HepG2 (cell line): ENCODE measurements at regions of chr9 and their contacts with region 1.

Region 1: GRCh38 chr9:129080602-129081387 is at the start of gene DOLPP1:
- DNase-seq: peak; percentile 97
- ATAC-seq: peak; percentile 95
- H3K4me3 ChIP-seq: peak within 1 kb of the TSS; percentile 75 to 97 (median 87)
- H3K27ac ChIP-seq: peak within 1 kb of the TSS; percentile 84
- H3K4me1 ChIP-seq: peaks cover 70% of the 10 kb centered on the region
- H3K27me3 ChIP-seq: no peaks in the 10 kb centered on the region
- CTCF ChIP-seq: no peak
- EP300 ChIP-seq: no peak
- POLR2A ChIP-seq: peak in 1 of 2 experiments; percentile 62; a peak in 2 of 4 replicates
- RAD21 ChIP-seq: 0 out of 2 replicates have a peak, but pooled peaks have one; percentile 30
- total RNA-seq, gene DOLPP1: 15.1 and 34.1 TPM in 2 replicates

Region 2: DNA sequence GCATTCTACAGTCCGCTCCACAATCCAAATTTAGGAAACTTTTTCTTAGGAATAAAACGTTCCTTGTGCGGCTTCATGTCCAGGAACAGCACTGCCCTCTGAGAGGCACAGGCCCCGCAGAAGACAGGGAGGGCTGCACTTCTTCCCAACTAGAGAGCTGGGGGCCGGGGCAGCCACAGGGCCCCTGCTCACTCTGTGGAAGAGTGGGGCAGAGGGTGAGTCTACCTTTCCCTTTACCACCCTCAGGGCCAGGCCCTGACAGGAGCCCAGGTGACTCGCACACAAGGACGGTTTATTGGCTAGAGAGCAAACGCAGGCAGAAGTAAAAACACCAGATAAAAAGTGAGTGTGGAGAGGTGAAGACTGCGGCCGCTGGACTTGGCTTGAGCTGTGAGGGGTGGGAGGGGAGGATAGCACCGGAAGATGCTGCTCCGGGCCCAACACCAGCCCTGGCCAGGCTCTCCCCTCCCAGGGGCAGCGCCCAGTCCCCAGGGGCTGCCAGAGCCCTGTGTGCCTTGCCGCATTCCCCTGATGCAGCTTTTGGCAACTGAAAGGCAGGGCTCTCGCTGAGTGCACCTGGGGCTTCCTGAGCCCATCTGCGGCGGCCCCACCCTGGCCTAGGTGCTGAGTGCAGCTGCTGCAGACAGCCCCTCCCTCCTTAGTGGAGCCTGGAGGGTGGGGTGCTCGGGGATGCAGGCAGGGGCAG is 72.9 kb before region 1 on chr9:
- CTCF ChIA-PET with region 1: no interaction called
- POLR2A ChIA-PET with region 1: no interaction called
- in situ Hi-C with region 1: no loop called
- intact Hi-C with region 1: no loop called
- DNase-seq: no peak
- ATAC-seq: no peak
- H3K4me3 ChIP-seq: no peak overlapping the region
- H3K27ac ChIP-seq: no peak overlapping the region
- H3K4me1 ChIP-seq: no peaks in the 10 kb centered on the region
- H3K27me3 ChIP-seq: no peaks in the 10 kb centered on the region
- CTCF ChIP-seq: no peak
- EP300 ChIP-seq: no peak
- POLR2A ChIP-seq: no peak
- RAD21 ChIP-seq: no peak

Region 3: DNA sequence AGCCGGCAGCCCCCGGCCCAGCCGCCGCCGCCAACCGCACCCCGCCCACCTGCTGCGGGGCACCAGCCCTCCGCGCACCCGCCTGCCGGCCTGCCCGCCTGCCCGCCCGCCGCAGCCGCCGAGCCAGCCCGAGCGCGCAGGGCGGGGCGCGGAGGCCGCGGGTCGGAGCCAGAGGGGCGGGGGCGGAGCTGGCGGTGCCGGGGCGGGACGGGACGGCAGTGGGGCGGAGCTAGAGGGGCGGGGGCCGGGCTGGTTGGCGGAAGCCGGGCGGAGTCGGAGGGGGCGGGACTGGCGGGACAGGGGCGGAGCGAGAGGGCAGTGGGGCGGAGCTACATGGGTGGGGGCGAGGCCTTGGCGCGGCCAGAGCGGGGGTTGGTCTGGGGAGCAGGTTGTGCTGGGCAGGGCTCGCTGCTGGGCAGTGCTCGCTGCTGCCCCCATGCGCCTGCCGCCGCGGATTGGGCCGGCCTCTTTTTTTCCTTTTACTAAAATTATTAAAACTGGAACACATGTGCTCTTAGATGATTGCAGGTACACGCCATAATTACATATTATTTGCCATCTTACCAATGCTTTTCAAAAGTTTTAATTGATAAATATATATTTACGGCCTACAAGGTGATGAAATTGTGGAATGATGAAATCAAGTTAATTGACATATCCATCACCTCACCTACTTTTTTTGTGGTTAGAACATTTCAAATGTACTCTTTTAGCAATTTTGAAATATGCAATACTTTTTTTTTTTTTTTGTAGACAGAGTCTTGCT is 52.4 kb before region 1 on chr9 and contains the start of gene SH3GLB2:
- CTCF ChIA-PET with region 1: no interaction called
- POLR2A ChIA-PET with region 1: interaction called, 12 read pairs
- in situ Hi-C with region 1: no loop called
- intact Hi-C with region 1: no loop called
- DNase-seq: peak; percentile 79
- ATAC-seq: peak; percentile 79
- H3K4me3 ChIP-seq: peak within 1 kb of the TSS; percentile 65 to 76 (median 69); a peak in 5 of 6 replicates
- H3K27ac ChIP-seq: peak within 1 kb of the TSS; percentile 55
- H3K4me1 ChIP-seq: peaks cover 38% of the 10 kb centered on the region
- H3K27me3 ChIP-seq: no peaks in the 10 kb centered on the region
- CTCF ChIP-seq: peak; percentile 78
- EP300 ChIP-seq: no peak
- POLR2A ChIP-seq: peak in 1 of 2 experiments; percentile 38; a peak in 1 of 4 replicates
- RAD21 ChIP-seq: peak; percentile 60
- total RNA-seq, gene SH3GLB2: 10.5 and 24.0 TPM in 2 replicates

Region 4: DNA sequence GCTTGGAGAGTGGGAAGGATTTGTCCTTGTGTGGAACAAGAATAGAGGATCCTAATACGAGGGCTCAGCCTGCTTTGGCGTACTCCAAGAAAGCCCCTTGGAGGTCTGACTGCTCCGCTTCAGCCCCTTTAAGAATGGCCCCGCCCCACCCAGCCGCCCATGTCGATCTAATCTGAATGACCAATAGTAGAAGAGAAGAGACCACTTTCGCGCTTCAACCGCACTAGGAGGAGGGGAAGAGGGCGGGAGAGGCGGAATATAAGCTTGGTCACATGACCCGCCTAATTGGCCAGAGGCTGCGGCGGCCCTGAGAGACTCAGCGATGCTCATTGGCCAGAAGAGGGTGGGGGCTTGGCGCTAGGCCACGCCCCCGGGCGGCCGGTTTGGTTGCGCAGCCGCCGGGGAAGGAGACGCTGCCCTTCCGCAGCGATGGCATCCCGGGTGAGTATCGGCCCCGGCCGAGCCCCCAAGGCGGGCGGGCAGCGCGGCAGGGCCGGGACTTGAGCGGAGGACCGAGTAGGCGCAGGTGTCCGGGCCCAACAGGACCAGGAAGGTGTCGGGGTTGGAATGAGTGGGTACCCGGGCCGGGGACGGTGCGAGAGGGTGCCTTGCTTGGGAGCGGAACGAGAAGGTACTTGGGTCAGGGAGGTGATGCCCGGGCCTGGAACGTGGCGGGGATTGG is 44.4 kb before region 1 on chr9 and contains the start of gene MIGA2:
- CTCF ChIA-PET with region 1: no interaction called
- POLR2A ChIA-PET with region 1: interaction called, 13 read pairs
- in situ Hi-C with region 1: no loop called
- intact Hi-C with region 1: loop called (anchors 5 kb)
- DNase-seq: peak; percentile 98
- ATAC-seq: peak; percentile 86
- H3K4me3 ChIP-seq: peak within 1 kb of the TSS; percentile 73 to 97 (median 96)
- H3K27ac ChIP-seq: peak within 1 kb of the TSS; percentile 77
- H3K4me1 ChIP-seq: peaks cover 27% of the 10 kb centered on the region
- H3K27me3 ChIP-seq: no peaks in the 10 kb centered on the region; a peak in 1 of 5 replicates
- CTCF ChIP-seq: no peak
- EP300 ChIP-seq: no peak
- POLR2A ChIP-seq: peak; percentile 71 to 74
- RAD21 ChIP-seq: peak; percentile 56; the same call in 1 of the 2 replicates
- total RNA-seq, gene MIGA2: 8.9 and 17.1 TPM in 2 replicates

Region 5: GRCh38 chr9:129064499-129064908 is 16.3 kb before region 1 on chr9:
- CTCF ChIA-PET with region 1: no interaction called
- POLR2A ChIA-PET with region 1: interaction called, 17 read pairs
- in situ Hi-C with region 1: no loop called
- intact Hi-C with region 1: no loop called
- DNase-seq: peak; percentile 95
- ATAC-seq: peak; percentile 94
- H3K4me3 ChIP-seq: no peak overlapping the region
- H3K27ac ChIP-seq: peak overlapping the region; percentile 66
- H3K4me1 ChIP-seq: peaks cover 26% of the 10 kb centered on the region
- H3K27me3 ChIP-seq: no peaks in the 10 kb centered on the region
- CTCF ChIP-seq: no peak
- EP300 ChIP-seq: peak in 1 of 2 experiments; percentile 21; a peak in 1 of 4 replicates
- POLR2A ChIP-seq: peak; percentile 33 to 59; a peak in 1 of 4 replicates
- RAD21 ChIP-seq: no peak

Region 6: GRCh38 chr9:129093421-129094204 is 12.8 kb after region 1 on chr9:
- CTCF ChIA-PET with region 1: no interaction called
- POLR2A ChIA-PET with region 1: interaction called, 11 read pairs
- in situ Hi-C with region 1: no loop called
- intact Hi-C with region 1: no loop called
- DNase-seq: no peak
- ATAC-seq: peak; percentile 34
- H3K4me3 ChIP-seq: no peak overlapping the region
- H3K27ac ChIP-seq: no peak overlapping the region
- H3K4me1 ChIP-seq: peaks cover 9% of the 10 kb centered on the region
- H3K27me3 ChIP-seq: no peaks in the 10 kb centered on the region
- CTCF ChIP-seq: no peak
- EP300 ChIP-seq: no peak
- POLR2A ChIP-seq: peak in 1 of 2 experiments; percentile 16; a peak in 1 of 4 replicates
- RAD21 ChIP-seq: no peak

Region 7: DNA sequence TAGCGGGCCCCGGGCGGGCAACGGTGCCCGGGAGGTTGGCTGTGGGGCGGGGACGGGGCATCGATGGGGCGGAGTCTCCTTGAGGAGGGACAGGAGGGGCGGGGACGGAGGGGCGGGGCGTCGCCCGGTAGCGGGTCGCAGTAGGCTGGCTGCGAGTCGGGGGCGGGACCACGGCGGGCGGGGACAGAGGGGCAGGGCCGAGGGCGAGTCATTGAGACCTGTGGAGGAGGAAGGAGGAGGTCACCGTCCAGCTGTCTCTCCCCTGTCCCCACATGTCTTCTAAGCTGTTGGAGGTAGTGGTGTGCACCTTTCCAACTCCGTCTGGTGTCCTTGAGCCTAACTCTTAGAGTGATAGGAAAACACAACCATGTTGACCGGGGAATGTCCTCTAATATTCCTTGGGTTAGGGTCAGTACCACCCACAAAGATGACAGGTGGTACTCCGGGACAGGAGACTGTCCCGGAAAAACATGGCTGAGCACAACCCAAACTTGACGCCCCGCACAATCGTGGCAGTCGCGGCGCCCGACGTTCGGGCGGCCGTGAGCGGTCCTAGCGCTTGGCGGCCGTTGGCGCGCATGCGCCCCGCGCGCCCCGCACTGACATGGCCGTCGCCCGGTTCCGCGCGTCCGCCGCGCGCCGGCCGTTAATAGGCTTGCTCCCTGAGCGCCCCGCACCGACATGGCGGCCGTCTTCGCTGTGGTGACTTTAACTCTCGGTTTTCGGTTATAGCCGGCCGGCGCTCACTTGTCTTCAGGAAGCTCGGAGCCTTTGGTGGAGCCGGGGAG is 30.1 kb after region 1 on chr9 and contains the starts of genes CRAT and PTPA:
- CTCF ChIA-PET with region 1: no interaction called
- POLR2A ChIA-PET with region 1: interaction called, 18 read pairs
- in situ Hi-C with region 1: no loop called
- intact Hi-C with region 1: no loop called
- DNase-seq: peak; percentile 83
- ATAC-seq: peak; percentile 83
- H3K4me3 ChIP-seq: peak within 1 kb of the TSS; percentile 87 to 98 (median 98)
- H3K27ac ChIP-seq: peak within 1 kb of the TSS; percentile 97
- H3K4me1 ChIP-seq: peaks cover 52% of the 10 kb centered on the region
- H3K27me3 ChIP-seq: no peaks in the 10 kb centered on the region; a peak in 1 of 5 replicates
- CTCF ChIP-seq: no peak
- EP300 ChIP-seq: no peak
- POLR2A ChIP-seq: peak; percentile 98 to 99
- RAD21 ChIP-seq: peak; percentile 33; the same call in 1 of the 2 replicates
- total RNA-seq, gene CRAT: 26.6 and 29.3 TPM in 2 replicates
- total RNA-seq, gene PTPA: 105 and 109 TPM in 2 replicates